Panc1 (cell line): ENCODE measurements at regions of chr10 and their contacts with region 1.

Region 1: GRCh38 chr10:99854860-99855259 is 72.4 kb downstream of the ABCC2 start:
- DNase-seq: no peak
- ATAC-seq: peak; percentile 67
- H3K4me3 ChIP-seq: no peak overlapping the region
- H3K27ac ChIP-seq: no peak overlapping the region
- H3K4me1 ChIP-seq: no peaks in the 10 kb centered on the region; the same call in 1 of the 2 replicates
- H3K27me3 ChIP-seq: no peaks in the 10 kb centered on the region
- CTCF ChIP-seq: peak; percentile 85

Region 2: DNA sequence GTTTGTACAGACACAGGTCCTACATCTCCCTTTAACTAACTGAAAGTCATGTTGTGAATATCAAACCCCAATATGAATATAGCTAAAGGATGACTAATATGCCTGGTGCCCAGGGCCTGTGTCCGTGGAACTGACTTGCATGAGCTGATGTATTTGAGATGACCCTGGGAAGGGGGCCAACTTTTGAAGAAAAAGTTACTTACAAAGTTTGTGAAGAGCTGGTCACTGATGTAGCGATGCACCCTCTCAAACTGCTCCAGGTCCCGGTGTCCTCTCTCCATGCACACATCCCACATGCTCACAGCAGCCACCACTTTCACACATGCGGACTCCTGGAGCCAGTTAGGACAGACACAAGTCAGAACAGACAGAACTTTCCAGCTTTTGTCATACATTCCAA is 33.8 kb after region 1 on chr10:
- CTCF ChIA-PET with region 1: no interaction called
- POLR2A ChIA-PET with region 1: no interaction called
- in situ Hi-C with region 1: no loop called
- intact Hi-C with region 1: no loop called
- DNase-seq: no peak
- ATAC-seq: no peak
- H3K4me3 ChIP-seq: no peak overlapping the region
- H3K27ac ChIP-seq: no peak overlapping the region
- H3K4me1 ChIP-seq: no peaks in the 10 kb centered on the region
- H3K27me3 ChIP-seq: no peaks in the 10 kb centered on the region
- CTCF ChIP-seq: no peak

Region 3: GRCh38 chr10:100100651-100101184 is 245.9 kb after region 1 on chr10:
- CTCF ChIA-PET with region 1: interaction called, 4 read pairs
- POLR2A ChIA-PET with region 1: no interaction called
- in situ Hi-C with region 1: no loop called
- intact Hi-C with region 1: loop called (anchors 10 kb)
- DNase-seq: peak; percentile 50
- ATAC-seq: peak; percentile 81
- H3K4me3 ChIP-seq: no peak overlapping the region
- H3K27ac ChIP-seq: no peak overlapping the region
- H3K4me1 ChIP-seq: no peaks in the 10 kb centered on the region
- H3K27me3 ChIP-seq: no peaks in the 10 kb centered on the region
- CTCF ChIP-seq: peak; percentile 76